ENCODE measurements at regions of chr10 and their contacts with region 1.

Region 1: GRCh38 chr10:91908337-91909116 is 759 bp downstream of the FGFBP3 start:
- DNase-seq: peak; percentile 87
- ATAC-seq: peak; percentile 83
- H3K4me3 ChIP-seq: peak overlapping the region; percentile 61 to 75 (median 69)
- H3K4me3 Mint-ChIP-seq: peak overlapping the region; percentile 96
- H3K27ac ChIP-seq: peak overlapping the region; percentile 9 to 52
- H3K27ac Mint-ChIP-seq: peak overlapping the region; percentile 93
- H3K4me1 ChIP-seq: peaks cover 10 to 11% of the 10 kb centered on the region in 2 donors
- H3K4me1 Mint-ChIP-seq: peaks cover 18% of the 10 kb centered on the region
- H3K27me3 ChIP-seq: no peaks in the 10 kb centered on the region
- H3K27me3 Mint-ChIP-seq: peaks cover 7% of the 10 kb centered on the region
- CTCF ChIP-seq: peak; percentile 45

Region 2: GRCh38 chr10:90871766-90872647 is 1036.5 kb before region 1 on chr10 and contains the start of gene RPP30:
- CTCF ChIA-PET with region 1: no interaction called
- POLR2A ChIA-PET with region 1: no interaction called
- intact Hi-C with region 1: loop called (anchors 5 kb)
- DNase-seq: peak; percentile 86
- ATAC-seq: peak; percentile 97
- H3K4me3 ChIP-seq: peak within 1 kb of the TSS; percentile 72 to 96 (median 92)
- H3K4me3 Mint-ChIP-seq: peak within 1 kb of the TSS; percentile 92
- H3K27ac ChIP-seq: peak within 1 kb of the TSS; percentile 51 to 62
- H3K27ac Mint-ChIP-seq: peak within 1 kb of the TSS; percentile 84
- H3K4me1 ChIP-seq: peaks cover 16 to 18% of the 10 kb centered on the region in 2 donors
- H3K4me1 Mint-ChIP-seq: peaks cover 32% of the 10 kb centered on the region
- H3K27me3 ChIP-seq: peaks cover 0 to 13% (median 7%) of the 10 kb centered on the region in 4 experiments
- H3K27me3 Mint-ChIP-seq: peaks cover 27% of the 10 kb centered on the region
- CTCF ChIP-seq: no peak
- total RNA-seq, gene RPP30: 41.7 and 42.3 TPM in 2 replicates

Region 3: DNA sequence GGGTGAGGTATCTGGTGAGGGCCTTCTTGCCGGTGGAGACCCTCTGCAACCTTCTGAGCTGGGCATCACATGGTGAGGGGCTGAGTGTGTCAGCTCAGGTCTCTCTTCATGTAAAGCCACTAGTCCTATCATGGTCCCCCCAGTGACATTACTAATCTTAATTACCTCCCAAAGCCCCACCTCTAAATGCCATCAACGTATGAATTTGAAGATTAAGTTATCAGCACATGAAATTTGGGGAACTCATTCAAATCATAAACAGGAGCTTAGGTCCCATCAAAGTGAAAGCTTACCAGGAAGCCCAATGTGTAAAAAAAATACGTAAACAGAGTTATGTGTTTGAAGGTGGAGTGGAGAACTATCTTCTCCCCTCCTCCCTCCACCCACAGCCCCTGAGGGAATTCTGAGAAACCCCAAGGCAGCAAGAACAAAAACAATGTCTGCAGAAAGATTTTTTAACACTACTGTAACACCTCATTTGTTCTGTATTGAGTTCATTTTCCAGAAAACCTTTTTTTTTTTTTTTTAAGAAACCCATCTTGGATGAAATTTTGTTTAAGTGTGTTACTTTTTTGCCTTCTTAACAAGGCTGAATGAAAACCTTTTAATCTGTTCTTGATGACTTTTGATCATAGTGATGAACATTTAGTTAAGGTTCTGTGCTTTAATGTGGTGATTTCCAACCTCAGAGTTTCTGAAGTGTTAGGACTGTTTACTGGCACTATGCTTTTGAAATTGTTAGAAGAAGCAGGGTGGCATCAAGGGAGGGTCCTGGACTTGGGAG is 707.1 kb before region 1 on chr10:
- CTCF ChIA-PET with region 1: no interaction called
- POLR2A ChIA-PET with region 1: no interaction called
- intact Hi-C with region 1: loop called (anchors 5 kb)
- DNase-seq: peak; percentile 86
- ATAC-seq: peak; percentile 85
- H3K4me3 ChIP-seq: peak overlapping the region; percentile 1 to 60 (median 18)
- H3K4me3 Mint-ChIP-seq: peak overlapping the region; percentile 79
- H3K27ac ChIP-seq: peak overlapping the region; percentile 73 to 77
- H3K27ac Mint-ChIP-seq: peak overlapping the region; percentile 76
- H3K4me1 ChIP-seq: peaks cover 78 to 83% of the 10 kb centered on the region in 2 donors
- H3K4me1 Mint-ChIP-seq: peaks cover 86% of the 10 kb centered on the region
- H3K27me3 ChIP-seq: no peaks in the 10 kb centered on the region
- H3K27me3 Mint-ChIP-seq: no peaks in the 10 kb centered on the region
- CTCF ChIP-seq: no peak

Region 4: GRCh38 chr10:91389636-91390512 is 518.7 kb before region 1 on chr10:
- CTCF ChIA-PET with region 1: interaction called, 20 read pairs
- POLR2A ChIA-PET with region 1: interaction called, 4 read pairs
- intact Hi-C with region 1: loop called (anchors 1 kb)
- DNase-seq: peak; percentile 78
- ATAC-seq: peak; percentile 85
- H3K4me3 ChIP-seq: no peak overlapping the region
- H3K4me3 Mint-ChIP-seq: no peak overlapping the region
- H3K27ac ChIP-seq: no peak overlapping the region
- H3K27ac Mint-ChIP-seq: no peak overlapping the region
- H3K4me1 ChIP-seq: no peaks in the 10 kb centered on the region
- H3K4me1 Mint-ChIP-seq: peaks cover 3% of the 10 kb centered on the region
- H3K27me3 ChIP-seq: peaks cover 0 to 3% (median 0%) of the 10 kb centered on the region in 4 experiments
- H3K27me3 Mint-ChIP-seq: peaks cover 33% of the 10 kb centered on the region
- CTCF ChIP-seq: peak; percentile 84

Region 5: DNA sequence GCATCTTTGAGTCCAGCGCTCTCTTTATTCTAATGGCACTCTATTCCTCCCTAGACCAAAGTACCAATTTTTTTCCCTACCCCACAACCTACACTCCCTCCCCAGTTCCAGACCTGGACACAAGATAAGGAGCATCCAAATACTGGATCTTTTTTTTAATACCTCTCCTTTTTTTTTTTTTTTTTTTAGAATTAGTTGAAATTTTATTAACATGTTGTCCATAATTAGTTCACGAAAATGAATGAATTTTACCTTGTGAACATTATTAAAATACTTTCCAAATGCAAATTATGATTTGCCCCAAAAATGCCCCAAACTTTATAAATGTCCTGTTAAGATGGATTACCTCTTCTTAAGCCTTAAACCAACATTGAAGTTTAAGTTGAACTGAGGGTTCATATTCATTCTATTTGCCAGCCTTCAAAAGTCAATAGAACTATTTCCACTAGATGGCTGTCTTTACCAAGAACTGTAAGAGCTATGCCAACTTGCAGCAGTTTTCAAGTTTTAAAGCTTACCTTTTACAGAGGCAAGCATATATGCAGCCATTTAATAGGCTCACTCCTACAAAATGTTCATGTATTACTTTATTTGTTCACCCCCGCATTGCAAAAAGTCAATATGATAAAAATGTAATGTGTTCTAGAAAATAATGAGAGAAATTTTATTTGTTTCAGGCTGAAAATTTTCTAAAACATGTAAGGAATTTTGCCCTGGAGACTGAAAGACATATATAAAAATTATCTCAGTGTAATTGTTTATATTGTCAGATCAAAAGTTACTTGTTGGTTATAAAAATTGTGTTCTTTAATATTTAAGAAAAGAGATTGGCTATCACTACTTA is 150.0 kb before region 1 on chr10:
- CTCF ChIA-PET with region 1: interaction called, 90 read pairs
- POLR2A ChIA-PET with region 1: no interaction called
- intact Hi-C with region 1: loop called (anchors 1 kb)
- DNase-seq: peak; percentile 67
- ATAC-seq: peak; percentile 47
- H3K4me3 ChIP-seq: no peak overlapping the region
- H3K4me3 Mint-ChIP-seq: no peak overlapping the region
- H3K27ac ChIP-seq: no peak overlapping the region
- H3K27ac Mint-ChIP-seq: no peak overlapping the region
- H3K4me1 ChIP-seq: no peaks in the 10 kb centered on the region
- H3K4me1 Mint-ChIP-seq: no peaks in the 10 kb centered on the region
- H3K27me3 ChIP-seq: peaks cover 0 to 6% (median 2%) of the 10 kb centered on the region in 4 experiments
- H3K27me3 Mint-ChIP-seq: peaks cover 39% of the 10 kb centered on the region
- CTCF ChIP-seq: peak; percentile 79

Region 6: DNA sequence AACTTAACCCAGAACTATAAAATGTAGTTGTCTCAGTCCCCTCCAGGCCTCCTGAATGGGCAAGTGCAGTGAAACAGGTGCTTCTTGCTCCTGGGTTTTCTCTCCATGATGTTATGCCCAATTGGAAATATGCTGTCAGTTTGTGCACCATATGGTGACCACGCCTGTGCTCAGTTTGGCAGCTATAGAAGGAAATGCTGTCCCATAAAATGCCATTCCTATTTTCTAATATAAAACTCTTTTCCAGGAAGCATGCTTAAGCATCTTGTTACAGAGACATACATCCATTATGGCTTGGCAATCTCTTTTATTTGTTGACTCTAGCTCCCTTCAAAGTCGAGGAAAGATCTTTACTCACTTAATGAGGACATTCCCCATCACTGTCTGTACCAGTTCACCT is 44.4 kb before region 1 on chr10:
- CTCF ChIA-PET with region 1: interaction called, 7 read pairs
- POLR2A ChIA-PET with region 1: no interaction called
- intact Hi-C with region 1: loop called (anchors 5 kb)
- DNase-seq: no peak
- ATAC-seq: no peak
- H3K4me3 ChIP-seq: no peak overlapping the region
- H3K4me3 Mint-ChIP-seq: no peak overlapping the region
- H3K27ac ChIP-seq: no peak overlapping the region
- H3K27ac Mint-ChIP-seq: no peak overlapping the region
- H3K4me1 ChIP-seq: no peaks in the 10 kb centered on the region
- H3K4me1 Mint-ChIP-seq: no peaks in the 10 kb centered on the region
- H3K27me3 ChIP-seq: no peaks in the 10 kb centered on the region
- H3K27me3 Mint-ChIP-seq: no peaks in the 10 kb centered on the region
- CTCF ChIP-seq: no peak

Measured in B cell (primary cell).